A549 (cell line): ENCODE measurements at regions of chr19 and their contacts with region 1.

Region 1: DNA sequence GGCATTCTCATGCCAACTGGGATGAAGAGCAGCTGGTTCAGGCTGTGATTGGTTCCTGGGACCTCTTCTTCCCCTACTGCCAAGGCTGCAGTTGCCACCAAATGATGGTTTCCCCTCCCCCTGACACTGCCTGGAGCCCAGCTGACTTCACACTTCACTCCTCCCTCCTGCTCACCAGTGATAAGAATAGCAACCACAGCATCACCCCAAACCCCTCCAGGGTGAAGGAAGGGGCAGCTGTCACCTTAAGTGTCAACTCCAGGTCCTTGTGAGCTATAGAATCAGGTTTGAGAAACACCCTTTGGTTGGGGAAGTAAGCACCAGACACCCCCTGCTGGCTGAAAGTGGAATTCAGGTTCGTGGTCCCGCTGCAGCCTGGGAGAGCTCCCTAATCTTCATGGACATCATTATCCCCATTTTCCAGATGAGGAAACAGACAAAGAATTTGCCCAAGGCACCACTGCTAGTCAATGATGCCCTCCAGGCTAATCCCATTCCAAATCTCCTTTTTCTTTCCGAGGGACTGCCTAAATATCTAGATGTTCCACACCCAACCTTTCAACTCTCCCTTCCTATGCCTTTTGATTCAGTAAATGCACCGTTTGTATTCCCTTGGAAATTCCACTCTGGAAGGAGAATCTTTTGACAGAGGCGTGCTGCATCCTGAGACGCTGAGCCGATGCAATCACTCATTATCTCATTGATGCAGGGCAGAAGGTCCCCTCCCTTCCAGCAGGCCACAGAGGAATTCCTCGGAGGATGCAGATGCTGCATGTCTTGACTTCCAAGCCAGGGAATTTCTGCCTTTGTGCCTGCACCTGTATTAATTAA is 50.6 kb upstream of the UQCRFS1 start:
- DNase-seq: peak; percentile 59 to 64
- ATAC-seq: peak; percentile 55 to 84; a peak in 4 of 6 replicates
- H3K4me3 ChIP-seq: no peak overlapping the region
- H3K27ac ChIP-seq: no peak overlapping the region
- H3K4me1 ChIP-seq: no peaks in the 10 kb centered on the region
- CTCF ChIP-seq: peak; percentile 79
- EP300 ChIP-seq: no peak
- POLR2A ChIP-seq: no peak
- RAD21 ChIP-seq: peak; percentile 67 to 72

Region 2: GRCh38 chr19:29247872-29248271 is 15.6 kb before region 1 on chr19:
- CTCF ChIA-PET with region 1: interaction called, 83 read pairs
- POLR2A ChIA-PET with region 1: no interaction called
- DNase-seq: no peak
- ATAC-seq: peak; percentile 54 to 63; a peak in 4 of 6 replicates
- H3K4me3 ChIP-seq: no peak overlapping the region
- H3K27ac ChIP-seq: no peak overlapping the region
- H3K4me1 ChIP-seq: no peaks in the 10 kb centered on the region
- CTCF ChIP-seq: no peak
- EP300 ChIP-seq: no peak
- POLR2A ChIP-seq: no peak
- RAD21 ChIP-seq: no peak

Region 3: GRCh38 chr19:29302002-29302928 is 38.7 kb after region 1 on chr19:
- CTCF ChIA-PET with region 1: no interaction called
- POLR2A ChIA-PET with region 1: no interaction called
- DNase-seq: no peak
- ATAC-seq: no peak
- H3K4me3 ChIP-seq: no peak overlapping the region
- H3K27ac ChIP-seq: no peak overlapping the region
- H3K4me1 ChIP-seq: no peaks in the 10 kb centered on the region
- CTCF ChIP-seq: no peak
- EP300 ChIP-seq: no peak
- POLR2A ChIP-seq: no peak
- RAD21 ChIP-seq: no peak

Region 4: DNA sequence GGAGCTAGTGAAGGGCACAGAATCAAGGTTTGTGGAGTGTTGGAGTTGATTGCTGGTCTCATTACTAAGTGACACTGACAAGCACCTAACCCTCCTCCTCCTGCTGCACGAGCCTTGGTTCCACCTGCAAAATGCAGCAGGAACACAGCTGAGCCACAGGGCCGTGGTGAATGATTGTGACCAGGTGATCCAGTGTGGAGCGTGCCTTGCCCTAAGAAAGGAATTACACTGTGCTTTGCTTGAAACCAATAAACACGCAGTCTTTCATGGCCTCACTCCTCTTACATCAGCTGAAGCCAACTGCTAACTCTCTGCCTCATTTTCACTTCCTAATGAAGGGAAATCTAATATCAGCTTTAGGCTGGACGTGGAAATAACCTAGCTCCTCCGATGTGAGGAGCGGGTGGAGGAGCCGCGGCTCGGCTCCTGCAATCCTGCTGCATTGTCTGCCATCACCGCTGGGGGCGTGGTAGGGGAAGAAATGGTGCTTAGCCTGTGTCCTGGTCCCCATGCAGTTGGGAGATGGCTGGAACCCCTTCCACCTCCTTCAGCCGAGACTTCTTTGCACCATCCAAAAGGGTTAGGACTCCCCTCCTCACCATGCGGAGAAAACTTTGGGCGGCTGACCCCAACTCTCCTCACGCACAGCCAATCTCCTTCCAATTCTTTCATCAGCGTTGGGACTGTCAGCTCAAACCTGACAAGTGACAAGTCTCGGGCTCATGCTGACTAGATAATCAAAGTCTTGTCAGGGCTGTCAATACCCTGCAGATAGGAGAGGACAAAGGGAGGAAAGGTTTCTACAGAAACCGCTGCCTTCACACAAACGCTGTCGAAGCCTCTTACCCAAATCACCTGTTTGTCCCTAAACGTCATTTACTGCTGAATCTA is 1536.6 kb after region 1 on chr19:
- CTCF ChIA-PET with region 1: no interaction called
- POLR2A ChIA-PET with region 1: no interaction called
- DNase-seq: peak; percentile 38 to 83
- ATAC-seq: peak; percentile 61 to 94; a peak in 4 of 6 replicates
- H3K4me3 ChIP-seq: no peak overlapping the region
- H3K27ac ChIP-seq: no peak overlapping the region
- H3K4me1 ChIP-seq: no peaks in the 10 kb centered on the region
- CTCF ChIP-seq: peak; percentile 56
- EP300 ChIP-seq: no peak
- POLR2A ChIP-seq: no peak
- RAD21 ChIP-seq: peak; percentile 32 to 56; a peak in 4 of 5 replicates